Dendritic cell treated with granulocyte-macrophage colony-stimulating factor and Interleukin-4, amounts not matched to agents 40 ng/mL and 50 ng/mL, for 4 days (primary cell): ENCODE measurements at regions of chr2 and their contacts with region 1.

Region 1: GRCh38 chr2:144607891-144608521 is 88.1 kb upstream of the ZEB2 start:
- H3K4me3 Mint-ChIP-seq: peak overlapping the region; percentile 35
- H3K27ac Mint-ChIP-seq: peak overlapping the region; percentile 94
- H3K4me1 Mint-ChIP-seq: peaks cover 55% of the 10 kb centered on the region
- H3K27me3 Mint-ChIP-seq: no peaks in the 10 kb centered on the region

Region 2: GRCh38 chr2:144519934-144520731 is 87.9 kb before region 1 on chr2 and contains the start of gene ZEB2:
- intact Hi-C with region 1: loop called (anchors 1 kb)
- H3K4me3 Mint-ChIP-seq: no peak within 1 kb of the TSS
- H3K27ac Mint-ChIP-seq: no peak within 1 kb of the TSS
- H3K4me1 Mint-ChIP-seq: peaks cover 27% of the 10 kb centered on the region
- H3K27me3 Mint-ChIP-seq: no peaks in the 10 kb centered on the region

Region 3: DNA sequence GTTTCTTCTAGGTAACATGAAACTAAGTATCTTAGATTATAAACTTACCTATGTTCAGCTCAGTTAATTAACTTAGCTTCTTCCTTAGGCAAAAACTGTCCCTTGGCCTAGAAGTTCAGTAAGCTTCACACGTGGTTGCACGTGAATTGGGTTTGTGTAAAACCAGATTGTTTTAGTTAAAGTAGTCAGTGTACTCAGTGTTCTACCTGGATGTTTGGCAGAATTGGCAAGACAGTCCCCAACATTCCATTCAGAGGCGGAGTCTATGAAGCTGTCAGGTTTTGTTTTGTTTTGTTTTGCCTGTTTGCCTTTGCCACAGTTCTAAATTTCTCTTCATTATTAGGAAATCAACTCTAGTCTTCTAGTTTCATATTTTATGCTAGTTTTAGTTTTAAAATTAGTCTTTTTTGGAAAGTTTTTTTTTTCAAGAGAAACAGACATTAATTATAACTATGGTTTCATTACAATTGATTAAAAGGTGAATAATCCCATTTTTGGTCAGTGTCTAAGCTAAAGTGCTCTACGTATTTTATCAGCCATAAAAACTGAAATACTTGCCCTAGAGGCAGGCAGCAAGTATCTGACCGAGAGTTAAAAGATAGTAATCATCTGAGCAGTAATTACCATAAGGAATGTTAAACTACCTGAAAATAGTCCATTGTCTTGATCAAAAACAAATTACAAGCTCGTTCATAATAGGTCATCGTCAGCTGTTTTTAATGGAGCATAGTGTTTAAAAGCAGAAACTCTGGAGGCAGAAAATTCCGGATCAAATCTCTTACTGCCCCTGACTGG is 17.4 kb after region 1 on chr2:
- intact Hi-C with region 1: no loop called
- H3K4me3 Mint-ChIP-seq: no peak overlapping the region
- H3K27ac Mint-ChIP-seq: no peak overlapping the region
- H3K4me1 Mint-ChIP-seq: peaks cover 14% of the 10 kb centered on the region
- H3K27me3 Mint-ChIP-seq: no peaks in the 10 kb centered on the region

Region 4: DNA sequence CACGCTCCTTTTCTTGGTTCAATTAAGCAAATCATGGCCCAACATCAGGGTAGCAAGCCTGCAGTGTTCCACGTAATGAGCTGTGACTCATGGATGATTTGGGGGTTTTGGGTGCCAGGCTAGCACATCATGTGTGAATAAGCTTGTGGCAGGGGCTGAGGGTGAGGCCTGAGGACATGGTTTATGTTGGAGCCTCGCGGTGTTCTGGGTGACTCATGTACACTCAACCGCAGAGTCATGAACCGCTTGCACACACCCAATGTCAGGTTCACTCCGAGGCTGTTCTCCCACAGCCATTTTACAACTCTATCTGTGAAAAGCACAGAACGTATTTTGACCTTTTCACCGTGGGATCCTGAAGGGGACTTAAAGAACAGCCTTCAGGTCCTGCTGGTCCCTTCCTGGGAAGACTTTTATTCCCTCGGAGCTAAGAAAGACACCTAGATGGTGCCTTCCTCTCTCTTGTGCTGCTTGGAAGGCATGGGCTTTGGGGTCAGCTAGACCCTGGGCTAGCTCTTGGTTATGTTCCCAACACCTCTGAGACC is 51.8 kb after region 1 on chr2:
- intact Hi-C with region 1: loop called (anchors 2 kb)
- H3K4me3 Mint-ChIP-seq: peak overlapping the region; percentile 37
- H3K27ac Mint-ChIP-seq: peak overlapping the region; percentile 95
- H3K4me1 Mint-ChIP-seq: peaks cover 61% of the 10 kb centered on the region
- H3K27me3 Mint-ChIP-seq: no peaks in the 10 kb centered on the region

Region 5: DNA sequence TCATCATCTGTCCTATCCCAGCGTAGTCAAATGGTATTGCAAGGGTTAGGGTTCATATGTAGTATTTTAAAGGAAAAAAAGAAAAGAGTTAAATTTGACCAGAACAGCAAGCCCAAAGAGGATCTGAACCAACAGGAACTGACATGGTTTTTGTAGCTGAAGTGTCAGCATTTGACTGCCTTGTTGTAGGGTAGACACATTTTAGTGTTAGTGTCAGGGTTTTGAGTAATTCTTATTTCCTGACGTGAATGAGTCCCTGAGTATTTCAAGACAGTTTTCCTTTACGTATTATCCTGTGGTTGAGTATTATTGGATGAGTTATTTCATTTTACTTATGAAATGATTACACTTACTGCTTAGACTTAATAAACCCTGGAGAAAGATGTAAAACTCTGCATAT is 85.2 kb after region 1 on chr2:
- intact Hi-C with region 1: loop called (anchors 2 kb)
- H3K4me3 Mint-ChIP-seq: no peak overlapping the region
- H3K27ac Mint-ChIP-seq: peak overlapping the region; percentile 95
- H3K4me1 Mint-ChIP-seq: peaks cover 30% of the 10 kb centered on the region
- H3K27me3 Mint-ChIP-seq: no peaks in the 10 kb centered on the region

Region 6: DNA sequence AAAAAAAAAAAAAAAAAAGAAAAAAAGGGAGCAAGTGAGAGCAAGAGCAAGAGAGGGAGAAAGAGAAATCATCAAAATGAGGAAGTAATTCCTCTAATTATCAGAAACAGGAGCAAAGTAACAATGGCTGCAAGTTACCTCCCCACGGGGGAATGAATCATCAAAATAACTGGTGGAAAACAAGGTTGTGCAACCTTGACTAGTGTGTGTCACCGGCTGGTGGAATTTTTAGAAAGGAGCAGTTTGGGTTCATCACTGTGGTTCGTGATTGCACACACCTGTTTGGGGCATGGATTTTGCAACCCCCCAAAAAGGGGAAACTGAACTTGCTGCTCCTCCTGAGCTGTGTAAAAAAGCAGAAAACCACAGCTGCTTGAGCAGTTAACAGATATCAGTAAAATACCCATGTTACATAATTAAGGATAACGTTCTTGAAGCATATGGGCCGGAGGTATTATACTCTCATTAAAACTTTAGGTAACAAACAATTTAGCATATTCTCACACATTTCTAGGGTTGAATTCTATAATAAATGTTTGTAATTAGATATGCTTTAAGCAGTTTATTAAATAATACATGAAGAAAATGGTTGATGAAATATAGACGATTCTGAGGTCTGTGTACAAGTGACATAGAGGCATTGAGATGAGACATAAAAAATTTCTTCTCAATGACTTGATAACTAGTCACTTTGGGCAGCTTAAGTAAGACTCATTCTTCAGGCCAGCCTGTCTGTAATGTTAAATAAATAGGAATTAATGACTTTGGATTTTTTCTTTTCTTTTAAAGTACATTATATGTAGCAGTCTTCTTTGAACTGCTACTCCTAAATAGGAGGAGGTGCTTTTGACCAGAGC is 96.1 kb after region 1 on chr2:
- intact Hi-C with region 1: loop called (anchors 2 kb)
- H3K4me3 Mint-ChIP-seq: no peak overlapping the region
- H3K27ac Mint-ChIP-seq: peak overlapping the region; percentile 95
- H3K4me1 Mint-ChIP-seq: peaks cover 60% of the 10 kb centered on the region
- H3K27me3 Mint-ChIP-seq: no peaks in the 10 kb centered on the region

Region 7: DNA sequence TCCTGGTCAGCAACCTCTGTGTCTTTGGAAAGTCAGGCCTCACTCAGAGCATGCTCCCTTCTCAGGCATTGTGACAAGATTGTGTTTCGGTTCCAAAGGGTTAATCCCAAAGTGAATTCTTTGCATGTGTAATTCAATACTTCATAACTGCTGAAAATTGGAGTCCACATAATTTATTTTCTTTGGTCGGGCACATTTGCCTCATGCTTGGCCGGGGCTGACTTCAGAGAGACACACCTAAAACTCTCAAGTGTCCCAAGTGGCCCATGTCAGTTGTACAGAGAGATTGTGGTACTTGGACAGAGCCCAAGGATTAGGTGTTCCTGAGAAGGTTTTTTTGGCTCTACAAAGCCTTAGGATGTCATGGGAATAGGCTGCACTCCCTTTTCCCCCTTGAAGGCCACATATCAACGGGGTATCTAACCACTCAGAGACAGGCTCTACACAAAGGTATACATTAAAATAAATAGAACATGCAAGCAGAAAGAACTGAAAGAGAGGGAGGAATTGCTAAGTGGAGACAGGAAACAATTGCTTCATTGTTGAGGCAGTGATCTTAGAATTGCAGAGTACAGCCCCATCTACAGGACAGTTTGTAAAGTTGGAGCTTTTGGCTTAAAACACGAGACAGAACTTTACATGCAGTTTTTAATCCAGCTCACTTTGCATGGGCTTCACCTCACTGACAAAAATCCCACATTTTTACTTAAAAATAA is 1144.2 kb after region 1 on chr2:
- intact Hi-C with region 1: loop called (anchors 5 kb)
- H3K4me3 Mint-ChIP-seq: peak overlapping the region; percentile 53
- H3K27ac Mint-ChIP-seq: peak overlapping the region; percentile 82
- H3K4me1 Mint-ChIP-seq: peaks cover 49% of the 10 kb centered on the region
- H3K27me3 Mint-ChIP-seq: no peaks in the 10 kb centered on the region